Gastrocnemius medialis (tissue), 4 donors: ENCODE measurements at regions of chr6 and their contacts with region 1.

Region 1: GRCh38 chr6:106097411-106098231 is 11.5 kb downstream of the PRDM1 start:
- DNase-seq: no peak
- ATAC-seq: peak; percentile 53 to 65
- H3K4me3 ChIP-seq: peak overlapping the region; percentile 28 to 65 (median 45)
- H3K27ac ChIP-seq: peak overlapping the region; percentile 8 to 71 (median 58)
- H3K4me1 ChIP-seq: peaks cover 0 to 11% of the 10 kb centered on the region in 2 donors
- H3K27me3 ChIP-seq: peaks cover 0 to 18% (median 10%) of the 10 kb centered on the region in 3 donors
- CTCF ChIP-seq: no peak
- POLR2A ChIP-seq: no peak

Region 2: GRCh38 chr6:105992315-105992961 is 105.2 kb before region 1 on chr6:
- in situ Hi-C with region 1: no loop called
- intact Hi-C with region 1: no loop called
- DNase-seq: peak; percentile 58 to 75
- ATAC-seq: peak; percentile 77 to 87
- H3K4me3 ChIP-seq: peak overlapping the region; percentile 70 to 98 (median 82)
- H3K27ac ChIP-seq: peak overlapping the region in 3 of 4 donors; percentile 24 to 33 (median 27)
- H3K4me1 ChIP-seq: peaks cover 16 to 19% of the 10 kb centered on the region in 2 donors
- H3K27me3 ChIP-seq: peaks cover 48 to 59% (median 52%) of the 10 kb centered on the region in 3 donors
- CTCF ChIP-seq: peak in 2 of 5 experiments; percentile 8 to 23
- POLR2A ChIP-seq: peak in 1 of 2 donors; percentile 31

Region 3: GRCh38 chr6:106325336-106326178 is 227.9 kb after region 1 on chr6 and contains the start of gene ATG5:
- in situ Hi-C with region 1: no loop called
- intact Hi-C with region 1: loop called (anchors 10 kb)
- DNase-seq: peak; percentile 96 to 99
- ATAC-seq: peak; percentile 97
- H3K4me3 ChIP-seq: peak within 1 kb of the TSS; percentile 71 to 90 (median 83)
- H3K27ac ChIP-seq: peak within 1 kb of the TSS; percentile 86 to 93 (median 89)
- H3K4me1 ChIP-seq: peaks cover 13 to 23% of the 10 kb centered on the region in 2 donors
- H3K27me3 ChIP-seq: no peaks in the 10 kb centered on the region
- CTCF ChIP-seq: no peak
- POLR2A ChIP-seq: peak; percentile 64 to 74
- total RNA-seq, gene ATG5: 18.9 to 22.3 (median 20.1) TPM